ENCODE measurements at regions of chr15 and their contacts with region 1.

Region 1: DNA sequence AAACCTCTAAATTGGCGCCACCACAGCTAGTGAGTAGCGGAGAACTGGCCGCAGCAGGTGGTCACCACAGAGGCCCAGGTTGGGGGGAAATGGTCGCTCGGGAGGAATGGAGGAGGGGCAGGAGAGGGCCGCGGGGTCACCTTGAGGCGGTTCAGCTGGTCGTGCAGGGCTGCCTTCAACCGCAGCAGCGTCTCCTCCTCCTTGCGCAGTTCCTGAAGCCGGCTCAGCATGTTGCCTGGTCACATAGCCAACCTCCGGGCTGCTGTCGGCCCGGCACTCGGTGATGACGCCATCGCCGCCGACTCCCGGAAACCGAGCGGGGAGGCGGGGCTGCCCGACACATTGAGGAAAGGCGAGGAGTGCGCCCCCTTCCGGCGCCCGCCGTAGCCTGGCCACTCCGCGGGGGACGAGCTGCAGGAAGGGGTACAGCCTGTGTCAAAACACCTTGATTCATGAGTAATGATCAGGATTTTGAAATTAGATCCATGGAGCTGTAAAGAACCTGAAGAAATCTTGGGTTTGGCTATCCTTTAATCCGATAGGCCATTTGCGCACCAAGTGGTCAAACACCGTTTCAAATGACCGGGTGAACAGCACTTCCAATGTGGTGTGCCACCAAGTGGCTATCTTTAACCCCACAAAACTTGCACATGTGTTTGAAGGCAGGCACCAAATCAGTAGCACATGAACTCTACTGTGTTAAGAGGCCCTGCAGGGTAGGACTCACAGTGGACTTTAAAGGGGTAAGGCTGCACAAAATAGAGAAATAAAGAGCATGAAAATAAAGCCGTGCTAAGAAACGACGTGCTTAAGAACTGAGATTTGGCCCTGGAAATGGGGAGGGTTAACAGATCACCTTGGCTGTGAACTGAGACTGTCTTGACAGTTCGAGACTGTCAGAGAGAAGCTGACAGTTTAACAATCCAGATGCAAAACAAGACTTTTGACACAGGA is at the start of gene SNAPC5:
- DNase-seq: peak; percentile 84
- H3K4me3 ChIP-seq: peak within 1 kb of the TSS; percentile 69 to 94 (median 83)
- H3K27ac ChIP-seq: peak within 1 kb of the TSS; percentile 89 to 95 (median 94)
- H3K4me1 ChIP-seq: peaks cover 14 to 60% (median 27%) of the 10 kb centered on the region in 3 donors
- H3K27me3 ChIP-seq: no peaks in the 10 kb centered on the region
- CTCF ChIP-seq: peak; percentile 94 to 99 (median 98)
- POLR2A ChIP-seq: peak in 3 of 4 donors; percentile 54 to 72 (median 64)
- total RNA-seq, gene SNAPC5: 7.8 to 31.1 (median 16.7) TPM

Region 2: GRCh38 chr15:66306381-66306780 is 191.4 kb before region 1 on chr15:
- intact Hi-C with region 1: no loop called
- DNase-seq: no peak
- H3K4me3 ChIP-seq: no peak overlapping the region
- H3K27ac ChIP-seq: no peak overlapping the region
- H3K4me1 ChIP-seq: no peaks in the 10 kb centered on the region
- H3K27me3 ChIP-seq: no peaks in the 10 kb centered on the region
- CTCF ChIP-seq: no peak
- POLR2A ChIP-seq: no peak

Region 3: DNA sequence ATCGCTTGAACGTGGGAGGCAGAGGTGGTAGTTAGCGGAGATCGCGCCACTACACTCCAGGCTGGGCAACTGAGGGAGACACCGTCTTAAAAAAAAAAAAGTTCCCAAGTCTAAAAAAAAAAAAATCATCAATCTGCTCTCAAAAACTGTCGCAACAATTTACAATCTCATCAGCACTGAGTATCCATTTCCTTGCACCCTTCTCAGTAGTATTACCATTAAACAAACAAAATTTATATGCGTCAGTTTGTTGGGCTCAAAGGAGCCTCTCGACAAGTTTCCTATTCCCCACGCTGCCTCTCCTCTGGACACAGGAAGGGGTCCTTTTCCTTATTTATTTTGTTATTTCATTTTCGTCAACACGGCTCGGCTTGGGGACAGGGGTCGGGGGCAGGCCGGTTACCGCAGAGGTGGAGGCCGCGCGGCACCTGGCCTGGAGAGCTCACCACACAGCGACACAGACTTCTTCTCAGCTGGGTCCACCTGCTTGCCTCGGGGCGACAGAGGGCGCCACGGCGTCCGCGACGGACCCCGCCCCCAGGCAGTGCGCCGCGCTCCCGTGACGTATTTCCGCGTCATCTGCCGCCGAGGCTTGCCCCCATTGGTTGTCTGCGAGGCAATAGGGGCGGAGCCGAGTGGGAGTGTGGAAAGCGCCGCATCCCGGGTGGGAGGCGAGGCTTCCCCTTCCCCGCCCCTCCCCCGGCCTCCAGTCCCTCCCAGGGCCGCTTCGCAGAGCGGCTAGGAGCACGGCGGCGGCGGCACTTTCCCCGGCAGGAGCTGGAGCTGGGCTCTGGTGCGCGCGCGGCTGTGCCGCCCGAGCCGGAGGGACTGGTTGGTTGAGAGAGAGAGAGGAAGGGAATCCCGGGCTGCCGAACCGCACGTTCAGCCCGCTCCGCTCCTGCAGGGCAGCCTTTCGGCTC is 111.3 kb before region 1 on chr15 and contains the start of gene MAP2K1:
- intact Hi-C with region 1: loop called (anchors 5 kb)
- DNase-seq: peak; percentile 83
- H3K4me3 ChIP-seq: peak within 1 kb of the TSS; percentile 67 to 98 (median 88)
- H3K27ac ChIP-seq: peak within 1 kb of the TSS; percentile 94 to 98 (median 96)
- H3K4me1 ChIP-seq: peaks cover 13 to 48% (median 15%) of the 10 kb centered on the region in 3 donors
- H3K27me3 ChIP-seq: no peaks in the 10 kb centered on the region
- CTCF ChIP-seq: peak; percentile 40 to 66 (median 55)
- POLR2A ChIP-seq: peak in 2 of 4 donors; percentile 38 to 76
- total RNA-seq, gene MAP2K1: 29.0 to 53.4 (median 45.3) TPM

Region 4: DNA sequence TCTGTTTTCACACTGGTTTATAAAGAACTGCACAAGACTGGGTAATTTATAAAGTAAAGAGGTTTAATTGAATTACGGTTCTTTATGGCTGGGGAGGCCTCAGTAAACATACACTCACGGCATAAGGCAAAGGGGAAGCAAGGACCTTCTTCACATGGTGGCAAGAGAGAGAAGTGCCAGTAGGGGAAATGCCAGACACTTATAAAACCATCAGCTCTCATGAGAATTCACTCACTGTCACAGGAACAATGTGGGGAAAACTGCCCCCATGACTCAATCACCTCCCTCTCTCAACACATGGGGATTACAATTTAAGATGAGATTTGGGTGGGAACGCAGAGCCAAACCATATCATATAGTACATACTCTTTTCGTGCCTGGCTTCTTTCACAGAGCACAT is 68.7 kb before region 1 on chr15:
- intact Hi-C with region 1: no loop called
- DNase-seq: no peak
- H3K4me3 ChIP-seq: no peak overlapping the region
- H3K27ac ChIP-seq: no peak overlapping the region
- H3K4me1 ChIP-seq: no peaks in the 10 kb centered on the region
- H3K27me3 ChIP-seq: no peaks in the 10 kb centered on the region
- CTCF ChIP-seq: no peak
- POLR2A ChIP-seq: no peak

Region 5: GRCh38 chr15:66440501-66440900 is 57.3 kb before region 1 on chr15:
- intact Hi-C with region 1: no loop called
- DNase-seq: no peak
- H3K4me3 ChIP-seq: no peak overlapping the region
- H3K27ac ChIP-seq: no peak overlapping the region
- H3K4me1 ChIP-seq: no peaks in the 10 kb centered on the region
- H3K27me3 ChIP-seq: no peaks in the 10 kb centered on the region
- CTCF ChIP-seq: no peak
- POLR2A ChIP-seq: no peak